Panc1 (cell line): ENCODE measurements at regions of chrX and their contacts with region 1.

Region 1: DNA sequence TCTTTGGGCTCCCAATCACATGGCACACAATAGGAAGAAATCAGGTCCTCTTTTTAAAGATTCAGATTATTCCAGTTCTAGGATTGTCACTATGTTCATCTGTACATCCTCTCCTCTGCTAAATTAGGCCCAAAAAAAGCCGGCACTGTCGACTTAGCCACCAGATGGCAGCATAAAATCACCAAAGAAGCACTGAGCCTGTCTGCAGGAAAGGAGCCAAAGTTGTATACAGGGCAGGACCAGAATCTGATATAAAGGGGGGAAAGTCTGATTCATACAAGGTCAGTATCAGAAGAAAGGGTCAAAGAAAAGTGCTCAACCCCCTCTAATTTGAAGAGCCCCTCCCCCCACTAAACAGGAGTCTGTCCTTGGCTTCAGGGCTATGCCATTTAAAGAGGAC is 292.5 kb downstream of the CHIC1 start:
- DNase-seq: peak; percentile 47
- ATAC-seq: peak; percentile 94
- H3K4me3 ChIP-seq: no peak overlapping the region
- H3K27ac ChIP-seq: peak overlapping the region; percentile 14; the same call in 1 of the 2 replicates
- H3K4me1 ChIP-seq: no peaks in the 10 kb centered on the region; the same call in 1 of the 2 replicates
- H3K27me3 ChIP-seq: no peaks in the 10 kb centered on the region
- CTCF ChIP-seq: peak; percentile 74

Region 2: GRCh38 chrX:73930300-73930699 is 74.8 kb after region 1 on chrX:
- CTCF ChIA-PET with region 1: interaction called, 10 read pairs
- POLR2A ChIA-PET with region 1: no interaction called
- in situ Hi-C with region 1: no loop called
- intact Hi-C with region 1: no loop called
- DNase-seq: no peak
- ATAC-seq: no peak
- H3K4me3 ChIP-seq: no peak overlapping the region
- H3K27ac ChIP-seq: no peak overlapping the region
- H3K4me1 ChIP-seq: no peaks in the 10 kb centered on the region
- H3K27me3 ChIP-seq: no peaks in the 10 kb centered on the region
- CTCF ChIP-seq: no peak

Region 3: GRCh38 chrX:74015379-74016019 is 160.0 kb after region 1 on chrX:
- CTCF ChIA-PET with region 1: no interaction called
- POLR2A ChIA-PET with region 1: interaction called, 8 read pairs
- in situ Hi-C with region 1: no loop called
- intact Hi-C with region 1: loop called (anchors 1 kb)
- DNase-seq: peak; percentile 53
- ATAC-seq: peak; percentile 96
- H3K4me3 ChIP-seq: no peak overlapping the region
- H3K27ac ChIP-seq: no peak overlapping the region
- H3K4me1 ChIP-seq: no peaks in the 10 kb centered on the region
- H3K27me3 ChIP-seq: no peaks in the 10 kb centered on the region
- CTCF ChIP-seq: peak; percentile 85

Region 4: DNA sequence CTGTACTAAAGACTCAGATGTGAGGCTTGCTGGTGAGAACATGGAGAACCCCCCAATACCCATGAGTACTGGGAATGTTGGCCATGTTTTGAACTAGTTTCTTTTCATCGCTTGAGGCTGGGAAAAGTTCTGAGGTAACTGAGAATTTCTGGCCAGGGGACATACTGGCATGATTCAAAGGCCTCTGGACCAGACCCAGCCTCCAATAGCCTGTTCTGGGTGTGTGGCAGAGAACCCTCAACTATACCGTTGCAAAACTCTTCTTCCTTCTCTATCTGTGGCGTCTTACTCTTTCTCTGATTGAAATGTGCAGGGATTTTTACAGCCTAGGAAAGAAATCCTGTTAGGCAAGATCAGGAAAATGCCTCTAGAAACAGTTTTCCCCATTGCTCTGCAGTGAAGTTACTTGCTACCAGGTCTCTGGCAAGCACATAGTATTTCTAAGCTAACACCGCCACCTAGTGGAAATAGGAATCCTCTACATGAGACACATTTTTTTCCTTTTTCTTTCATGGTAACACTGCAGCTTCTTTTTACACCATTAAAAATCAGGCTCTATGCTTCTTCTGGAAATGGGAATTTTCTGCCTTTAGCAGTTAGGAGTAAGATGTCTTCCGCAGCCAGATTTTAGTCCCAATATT is 277.7 kb after region 1 on chrX:
- CTCF ChIA-PET with region 1: no interaction called
- POLR2A ChIA-PET with region 1: no interaction called
- in situ Hi-C with region 1: no loop called
- intact Hi-C with region 1: loop called (anchors 2 kb)
- DNase-seq: peak; percentile 27
- ATAC-seq: peak; percentile 96
- H3K4me3 ChIP-seq: no peak overlapping the region
- H3K27ac ChIP-seq: peak overlapping the region; percentile 68; the same call in 1 of the 2 replicates
- H3K4me1 ChIP-seq: peaks cover 11% of the 10 kb centered on the region
- H3K27me3 ChIP-seq: no peaks in the 10 kb centered on the region
- CTCF ChIP-seq: peak; percentile 66